Caco-2 (cell line): ENCODE measurements at regions of chr12 and their contacts with region 1.

Region 1: GRCh38 chr12:7892186-7892980 is 19.7 kb upstream of the SLC2A14 start:
- DNase-seq: no peak
- H3K4me3 ChIP-seq: no peak overlapping the region
- H3K4me3 Mint-ChIP-seq: peak overlapping the region; percentile 73
- H3K27ac Mint-ChIP-seq: peak overlapping the region; percentile 76
- H3K4me1 ChIP-seq: peaks cover 16% of the 10 kb centered on the region
- H3K4me1 Mint-ChIP-seq: peaks cover 25% of the 10 kb centered on the region
- H3K27me3 ChIP-seq: no peaks in the 10 kb centered on the region
- H3K27me3 Mint-ChIP-seq: no peaks in the 10 kb centered on the region
- CTCF ChIP-seq: no peak

Region 2: DNA sequence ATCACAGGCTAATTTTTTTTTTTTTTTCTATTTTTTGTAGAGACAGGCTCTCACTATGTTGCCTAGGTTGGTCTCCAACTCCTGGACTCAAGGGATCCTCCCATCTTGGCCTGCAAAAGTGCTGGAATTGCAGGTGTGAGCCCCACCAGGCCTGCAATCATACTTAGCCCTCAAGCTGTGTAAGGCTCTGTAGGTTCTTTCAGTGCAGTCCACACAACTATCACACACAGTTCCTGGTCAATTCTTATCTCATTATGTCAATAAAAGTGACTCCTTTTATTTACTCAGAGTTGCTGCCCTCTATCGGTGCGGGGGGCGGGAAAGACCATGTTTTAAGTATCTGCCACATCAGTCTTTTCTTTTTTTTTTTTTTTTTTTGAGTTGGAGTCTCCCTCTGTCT is 14.6 kb after region 1 on chr12:
- CTCF ChIA-PET with region 1: interaction called, 5 read pairs
- POLR2A ChIA-PET with region 1: interaction called, 6 read pairs
- intact Hi-C with region 1: loop called (anchors 1 kb)
- DNase-seq: peak; percentile 96 to 98
- H3K4me3 ChIP-seq: no peak overlapping the region
- H3K4me3 Mint-ChIP-seq: peak overlapping the region; percentile 54
- H3K27ac Mint-ChIP-seq: peak overlapping the region; percentile 98
- H3K4me1 ChIP-seq: peaks cover 34% of the 10 kb centered on the region
- H3K4me1 Mint-ChIP-seq: peaks cover 38% of the 10 kb centered on the region
- H3K27me3 ChIP-seq: no peaks in the 10 kb centered on the region
- H3K27me3 Mint-ChIP-seq: no peaks in the 10 kb centered on the region
- CTCF ChIP-seq: peak; percentile 81 to 83